Pancreas (tissue), 10 donors: ENCODE measurements at regions of chr16 and their contacts with region 1.

Region 1: DNA sequence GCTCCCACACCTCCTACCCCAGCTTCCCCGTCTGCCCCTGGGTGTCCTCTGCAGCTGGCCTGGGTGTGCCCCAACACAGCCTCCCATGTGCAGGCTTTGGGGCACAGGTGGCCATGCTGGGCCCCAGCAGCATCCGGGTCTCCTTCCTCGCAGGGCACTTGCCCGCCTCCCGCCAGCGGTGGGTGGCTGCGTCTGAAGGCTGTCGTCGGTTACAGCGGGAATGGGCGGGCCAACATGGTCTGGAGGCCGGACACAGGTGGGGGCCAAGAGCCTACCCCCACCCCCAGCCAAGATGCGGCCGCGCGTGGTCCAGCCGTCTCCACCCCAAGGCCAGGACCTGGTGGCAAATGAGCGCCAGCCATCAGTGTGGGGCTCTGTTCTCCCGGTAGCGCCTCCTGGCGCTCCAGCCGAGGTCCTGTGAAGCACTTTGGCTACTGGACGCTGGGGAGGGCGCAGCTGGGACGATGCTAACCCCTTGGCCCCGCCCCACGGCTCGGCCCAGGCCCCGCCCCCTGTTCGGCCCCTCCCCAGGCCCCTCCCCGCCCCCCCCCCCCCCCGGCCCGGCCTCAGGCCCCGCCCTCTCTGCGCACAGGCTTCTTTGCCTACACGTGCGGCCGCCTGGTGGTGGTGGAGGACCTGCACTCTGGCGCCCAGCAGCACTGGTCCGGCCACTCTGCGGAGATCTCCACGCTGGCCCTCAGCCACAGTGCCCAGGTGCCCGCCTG is 7.3 kb upstream of the RHOT2 start:
- DNase-seq: peak in 5 of 6 donors; percentile 92 to 98 (median 95)
- ATAC-seq: peak; percentile 82 to 90 (median 88)
- H3K4me3 ChIP-seq: peak overlapping the region in 2 of 4 donors; percentile 9 to 19
- H3K27ac ChIP-seq: peak overlapping the region; percentile 60 to 72 (median 63)
- H3K4me1 ChIP-seq: peaks cover 5 to 7% (median 5%) of the 10 kb centered on the region in 3 donors
- H3K27me3 ChIP-seq: no peaks in the 10 kb centered on the region
- CTCF ChIP-seq: peak; percentile 35 to 64 (median 48)

Region 2: DNA sequence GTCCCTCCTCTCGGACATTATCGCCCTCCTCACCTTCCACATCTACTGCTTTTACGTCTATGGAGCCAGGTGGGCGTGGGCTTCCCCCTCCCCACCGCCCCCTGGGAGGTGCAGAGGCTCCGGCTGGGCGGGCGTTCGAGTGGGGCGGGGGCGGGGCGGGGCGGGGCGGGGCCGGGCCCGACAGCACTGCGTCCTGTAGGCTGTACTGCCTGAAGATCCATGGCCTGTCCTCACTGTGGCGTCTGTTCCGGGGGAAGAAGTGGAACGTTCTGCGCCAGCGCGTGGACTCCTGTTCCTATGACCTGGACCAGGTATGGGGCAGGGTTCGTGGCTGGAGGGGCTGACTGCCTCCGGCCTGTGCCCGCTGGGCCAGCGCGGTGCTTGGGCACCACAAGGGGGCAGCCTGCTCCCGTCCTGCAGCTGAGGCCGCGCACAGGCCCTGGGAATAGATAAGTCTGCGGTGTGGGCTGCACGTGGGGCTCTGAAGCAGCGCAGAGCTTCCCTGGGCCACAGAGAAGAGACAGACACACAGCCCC is 81.7 kb before region 1 on chr16:
- intact Hi-C with region 1: loop called in 1 of 3 experiments (anchors 5 kb)
- DNase-seq: peak; percentile 64 to 95 (median 84)
- ATAC-seq: peak; percentile 52 to 74 (median 66)
- H3K4me3 ChIP-seq: peak overlapping the region in 1 of 4 donors; percentile 18
- H3K27ac ChIP-seq: no peak overlapping the region
- H3K4me1 ChIP-seq: peaks cover 0 to 19% (median 16%) of the 10 kb centered on the region in 3 donors
- H3K27me3 ChIP-seq: no peaks in the 10 kb centered on the region
- CTCF ChIP-seq: peak; percentile 64 to 85 (median 78)